ENCODE measurements at regions of chr5 and their contacts with region 1.

Region 1: GRCh38 chr5:173887610-173888472 is at the start of gene CPEB4:
- DNase-seq: peak; percentile 99
- H3K4me3 ChIP-seq: peak within 1 kb of the TSS; percentile 78
- H3K27ac ChIP-seq: peak within 1 kb of the TSS; percentile 84
- H3K27me3 ChIP-seq: no peaks in the 10 kb centered on the region
- CTCF ChIP-seq: no peak
- polyA plus RNA-seq, gene CPEB4: 20.3 and 21.3 TPM in 2 replicates

Region 2: GRCh38 chr5:173802670-173803165 is 85.1 kb before region 1 on chr5:
- CTCF ChIA-PET with region 1: no interaction called
- POLR2A ChIA-PET with region 1: no interaction called
- DNase-seq: no peak
- H3K4me3 ChIP-seq: no peak overlapping the region
- H3K27ac ChIP-seq: no peak overlapping the region
- H3K27me3 ChIP-seq: no peaks in the 10 kb centered on the region
- CTCF ChIP-seq: no peak

Region 3: GRCh38 chr5:173823711-173824528 is 63.9 kb before region 1 on chr5:
- CTCF ChIA-PET with region 1: no interaction called
- POLR2A ChIA-PET with region 1: interaction called, 11 read pairs
- DNase-seq: peak; percentile 84
- H3K4me3 ChIP-seq: no peak overlapping the region
- H3K27ac ChIP-seq: peak overlapping the region; percentile 53
- H3K27me3 ChIP-seq: no peaks in the 10 kb centered on the region
- CTCF ChIP-seq: no peak

Region 4: GRCh38 chr5:174596429-174596828 is 708.6 kb after region 1 on chr5:
- CTCF ChIA-PET with region 1: interaction called, 16 read pairs
- POLR2A ChIA-PET with region 1: no interaction called
- DNase-seq: no peak
- H3K4me3 ChIP-seq: no peak overlapping the region
- H3K27ac ChIP-seq: no peak overlapping the region
- H3K27me3 ChIP-seq: no peaks in the 10 kb centered on the region
- CTCF ChIP-seq: no peak

Measured in AG04450 (cell line).